ENCODE measurements at regions of chr18 and their contacts with region 1.

Region 1: GRCh38 chr18:76803814-76804213 is 18.5 kb upstream of the ZNF236 start:
- DNase-seq: peak; percentile 85
- H3K4me3 Mint-ChIP-seq: no peak overlapping the region
- H3K27ac Mint-ChIP-seq: no peak overlapping the region
- H3K4me1 Mint-ChIP-seq: peaks cover 11% of the 10 kb centered on the region
- H3K27me3 Mint-ChIP-seq: peaks cover 7% of the 10 kb centered on the region

Region 2: DNA sequence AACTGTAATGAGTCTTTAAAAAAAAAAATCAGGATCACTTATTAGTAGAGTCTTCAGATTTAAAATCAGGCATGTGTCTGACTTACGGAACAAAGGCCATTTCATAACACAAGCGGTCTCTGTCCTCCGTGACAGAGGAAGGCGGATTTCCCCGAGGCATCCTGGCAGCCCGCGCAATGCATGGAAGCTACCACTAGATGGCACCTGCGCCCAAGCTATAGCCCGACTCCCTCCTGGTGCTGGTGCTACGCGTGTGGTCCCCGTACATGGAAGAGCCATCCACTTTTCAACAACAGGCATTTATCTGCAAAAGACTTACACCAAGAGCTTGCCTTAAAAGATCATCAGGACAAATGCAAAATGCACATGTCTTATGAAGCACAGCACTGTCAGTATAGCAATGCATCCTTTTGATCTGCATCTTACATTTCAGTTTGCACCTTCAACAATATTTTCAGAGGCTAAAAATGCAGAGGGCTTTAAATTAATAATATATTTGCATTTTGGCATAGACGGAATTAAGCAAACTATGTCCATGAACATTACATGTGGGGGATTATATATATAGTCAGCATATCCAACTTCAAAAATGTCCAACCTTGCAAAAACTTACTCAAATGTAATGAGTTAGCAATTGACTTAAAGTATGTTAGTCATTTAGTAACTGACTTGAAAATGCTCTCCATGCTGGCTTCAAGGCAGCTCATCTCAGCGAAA is 404.8 kb before region 1 on chr18:
- CTCF ChIA-PET with region 1: interaction called, 7 read pairs
- POLR2A ChIA-PET with region 1: no interaction called
- intact Hi-C with region 1: loop called (anchors 1 kb)
- DNase-seq: peak; percentile 83
- H3K4me3 Mint-ChIP-seq: no peak overlapping the region
- H3K27ac Mint-ChIP-seq: no peak overlapping the region
- H3K4me1 Mint-ChIP-seq: peaks cover 5% of the 10 kb centered on the region
- H3K27me3 Mint-ChIP-seq: no peaks in the 10 kb centered on the region

Region 3: GRCh38 chr18:76791106-76791505 is 12.7 kb before region 1 on chr18:
- CTCF ChIA-PET with region 1: interaction called, 28 read pairs
- POLR2A ChIA-PET with region 1: interaction called, 5 read pairs
- intact Hi-C with region 1: no loop called
- DNase-seq: no peak
- H3K4me3 Mint-ChIP-seq: no peak overlapping the region
- H3K27ac Mint-ChIP-seq: no peak overlapping the region
- H3K4me1 Mint-ChIP-seq: peaks cover 6% of the 10 kb centered on the region
- H3K27me3 Mint-ChIP-seq: peaks cover 12% of the 10 kb centered on the region

Region 4: DNA sequence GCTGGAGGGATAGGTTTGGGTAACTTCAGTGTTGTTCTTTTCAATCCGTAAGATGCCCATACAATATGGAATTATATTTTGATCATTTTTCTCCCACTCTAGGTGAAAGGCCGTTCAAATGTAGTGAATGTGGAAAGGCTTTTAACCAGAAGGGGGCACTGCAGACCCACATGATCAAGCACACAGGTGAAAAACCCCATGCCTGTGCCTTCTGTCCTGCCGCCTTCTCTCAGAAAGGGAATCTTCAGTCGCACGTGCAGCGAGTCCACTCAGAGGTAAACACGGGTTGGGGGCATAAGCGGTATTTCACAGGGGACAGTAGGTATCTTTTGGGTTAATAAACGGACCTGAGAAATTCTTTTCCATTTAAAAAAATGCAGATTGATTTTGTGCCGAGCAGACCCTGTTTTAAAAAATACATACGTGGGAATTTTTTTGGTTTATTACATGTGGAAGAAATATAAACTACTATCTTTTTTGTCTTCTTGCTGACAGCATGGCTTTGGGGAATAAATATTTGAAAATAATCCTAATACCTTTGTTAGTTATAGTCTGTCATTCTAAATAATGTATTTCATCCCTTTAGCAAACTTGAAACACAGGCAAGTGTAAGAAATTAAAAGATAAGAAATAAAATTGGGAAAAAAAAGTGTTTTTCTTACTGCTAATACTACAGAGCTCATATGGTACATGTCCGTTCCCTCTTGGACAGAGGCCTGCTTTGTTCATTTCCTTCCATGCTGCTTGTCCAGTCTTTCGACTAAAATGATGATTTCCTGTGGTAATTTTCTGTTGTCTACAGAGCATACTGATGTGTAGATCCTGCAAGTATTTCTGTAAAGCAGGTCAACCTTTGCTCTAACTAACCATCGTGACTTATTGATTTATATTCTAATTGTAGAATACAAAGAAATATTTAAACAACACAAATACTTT is 71.8 kb after region 1 on chr18:
- CTCF ChIA-PET with region 1: interaction called, 25 read pairs
- POLR2A ChIA-PET with region 1: no interaction called
- intact Hi-C with region 1: loop called (anchors 1 kb)
- DNase-seq: peak; percentile 58
- H3K4me3 Mint-ChIP-seq: no peak overlapping the region
- H3K27ac Mint-ChIP-seq: peak overlapping the region; percentile 83
- H3K4me1 Mint-ChIP-seq: peaks cover 15% of the 10 kb centered on the region
- H3K27me3 Mint-ChIP-seq: no peaks in the 10 kb centered on the region

Region 5: GRCh38 chr18:77000527-77000926 is 196.7 kb after region 1 on chr18:
- CTCF ChIA-PET with region 1: interaction called, 11 read pairs
- POLR2A ChIA-PET with region 1: no interaction called
- intact Hi-C with region 1: no loop called
- DNase-seq: peak; percentile 62
- H3K4me3 Mint-ChIP-seq: no peak overlapping the region
- H3K27ac Mint-ChIP-seq: no peak overlapping the region
- H3K4me1 Mint-ChIP-seq: peaks cover 17% of the 10 kb centered on the region
- H3K27me3 Mint-ChIP-seq: no peaks in the 10 kb centered on the region

Region 6: DNA sequence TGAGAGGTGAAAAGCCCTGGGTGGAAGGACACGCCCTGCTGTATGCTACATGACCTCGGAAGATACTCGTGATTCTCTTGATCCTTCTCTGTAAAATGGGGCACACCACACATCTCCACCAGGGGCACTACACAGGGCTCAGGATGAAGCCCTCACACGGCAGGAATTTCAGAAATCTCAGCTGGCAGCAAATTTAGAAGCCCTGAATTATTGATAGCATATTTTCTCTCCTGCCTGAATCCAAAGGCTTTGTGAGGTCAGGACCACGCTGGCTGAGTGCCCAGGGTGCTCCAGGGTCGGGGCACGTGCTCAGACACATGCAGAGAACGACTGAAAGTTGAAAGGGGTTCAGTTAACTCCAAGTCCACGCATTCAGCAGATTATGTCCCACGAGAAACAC is 403.7 kb after region 1 on chr18:
- CTCF ChIA-PET with region 1: interaction called, 5 read pairs
- POLR2A ChIA-PET with region 1: no interaction called
- intact Hi-C with region 1: loop called (anchors 5 kb)
- DNase-seq: peak; percentile 74
- H3K4me3 Mint-ChIP-seq: no peak overlapping the region
- H3K27ac Mint-ChIP-seq: peak overlapping the region; percentile 76
- H3K4me1 Mint-ChIP-seq: peaks cover 32% of the 10 kb centered on the region
- H3K27me3 Mint-ChIP-seq: no peaks in the 10 kb centered on the region